ENCODE measurements at regions of chr14 and their contacts with region 1.

Region 1: GRCh38 chr14:50667996-50668825 is at the start of gene SAV1:
- DNase-seq: peak; percentile 92
- H3K4me3 ChIP-seq: peak within 1 kb of the TSS; percentile 75 to 97 (median 87)
- H3K27ac ChIP-seq: peak within 1 kb of the TSS; percentile 92 to 100 (median 97)
- H3K4me1 ChIP-seq: peaks cover 0 to 26% (median 21%) of the 10 kb centered on the region in 4 donors
- H3K27me3 ChIP-seq: no peaks in the 10 kb centered on the region
- CTCF ChIP-seq: no peak
- EP300 ChIP-seq: peak in 2 of 4 donors; percentile 20 to 21
- POLR2A ChIP-seq: peak; percentile 41 to 64
- total RNA-seq, gene SAV1: 32.0 to 38.2 (median 35.3) TPM

Region 2: DNA sequence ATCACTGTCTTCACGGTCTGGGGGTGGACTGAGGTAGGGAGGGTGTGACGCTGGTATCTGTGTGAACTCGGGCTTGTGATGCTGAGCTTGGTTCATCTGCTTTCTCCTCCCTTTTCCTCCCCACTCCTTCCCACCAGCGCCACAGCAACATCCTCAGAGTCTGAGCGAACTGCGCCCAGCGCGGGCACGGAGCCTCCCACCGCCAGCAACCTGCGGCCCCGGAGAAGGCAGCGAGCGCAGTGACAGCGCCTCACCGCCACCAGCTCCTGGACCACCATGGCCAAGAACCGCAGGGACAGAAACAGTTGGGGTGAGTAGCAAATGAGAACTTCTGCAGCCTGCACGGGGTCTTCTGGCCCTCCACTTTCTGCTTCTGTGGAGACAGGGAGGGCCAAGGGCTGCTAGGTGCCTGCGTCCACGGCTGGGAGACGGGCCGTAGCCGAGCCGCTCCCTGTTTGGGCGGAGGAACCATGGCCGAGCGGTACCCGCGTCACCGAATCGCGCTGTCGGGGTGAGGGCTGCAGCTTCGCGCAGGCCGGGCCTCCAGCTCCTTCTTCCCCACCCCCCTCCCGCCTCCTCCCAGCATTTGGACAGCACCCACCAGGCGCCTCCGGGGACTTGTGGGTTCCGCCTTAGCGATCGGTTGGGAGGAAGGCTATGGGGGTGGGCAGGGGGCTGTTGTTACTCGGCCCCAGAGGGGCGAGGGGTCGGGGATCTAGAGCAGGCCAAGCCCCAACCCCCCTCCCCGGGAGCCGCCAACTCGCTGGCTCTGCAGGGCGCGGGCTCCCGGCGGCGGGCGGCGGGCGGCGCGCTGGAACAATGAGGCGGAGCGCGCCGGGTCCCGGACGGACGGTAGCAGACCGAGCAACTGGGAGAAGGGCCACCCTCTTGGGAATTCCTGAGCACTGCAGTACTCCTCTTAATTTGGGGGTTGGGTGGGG is 108.0 kb before region 1 on chr14 and contains the start of gene ATL1:
- intact Hi-C with region 1: loop called (anchors 5 kb)
- DNase-seq: peak; percentile 90
- H3K4me3 ChIP-seq: peak within 1 kb of the TSS; percentile 66 to 90 (median 76)
- H3K27ac ChIP-seq: peak within 1 kb of the TSS; percentile 88 to 97 (median 96)
- H3K4me1 ChIP-seq: peaks cover 0 to 17% (median 11%) of the 10 kb centered on the region in 4 donors
- H3K27me3 ChIP-seq: no peaks in the 10 kb centered on the region
- CTCF ChIP-seq: no peak
- EP300 ChIP-seq: no peak
- POLR2A ChIP-seq: peak; percentile 18 to 50
- total RNA-seq, gene ATL1: 9.1 to 22.5 (median 11.3) TPM